Activated CD4-positive, alpha-beta T cell treated with anti-CD3 and anti-CD28 coated beads, Interleukin-2, amount 10 ng/mL, durations not matched to agents 24 days and 14 days (primary cell): ENCODE measurements at regions of chr10 and their contacts with region 1.

Region 1: DNA sequence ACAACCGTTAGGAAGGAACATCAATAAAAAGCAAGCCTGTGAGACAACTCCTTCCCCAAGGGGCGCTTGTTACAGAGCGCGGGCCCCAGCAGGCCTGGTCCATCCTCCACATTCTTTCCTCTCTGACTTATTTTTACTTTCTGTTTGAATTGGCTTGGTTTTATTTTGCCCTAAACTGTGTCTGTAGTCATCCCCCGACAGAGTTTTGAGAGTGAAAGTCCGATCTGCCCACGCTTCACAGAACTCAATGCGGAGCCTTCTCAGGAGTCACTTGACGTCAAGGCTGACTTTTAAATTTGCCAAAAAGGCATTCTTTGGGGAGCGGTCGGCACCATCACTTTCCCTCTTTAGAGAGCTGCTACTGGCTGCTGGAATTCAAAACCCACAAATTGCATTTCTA is 150.1 kb upstream of the KLF6 start:
- DNase-seq: peak; percentile 93
- H3K4me3 Mint-ChIP-seq: peak overlapping the region; percentile 65
- H3K27ac Mint-ChIP-seq: peak overlapping the region; percentile 88
- H3K4me1 Mint-ChIP-seq: peaks cover 59% of the 10 kb centered on the region
- H3K27me3 Mint-ChIP-seq: no peaks in the 10 kb centered on the region

Region 2: GRCh38 chr10:3071405-3072198 is 863.5 kb before region 1 on chr10:
- intact Hi-C with region 1: no loop called
- DNase-seq: peak; percentile 75
- H3K4me3 Mint-ChIP-seq: peak overlapping the region; percentile 72
- H3K27ac Mint-ChIP-seq: peak overlapping the region; percentile 79
- H3K4me1 Mint-ChIP-seq: peaks cover 58% of the 10 kb centered on the region
- H3K27me3 Mint-ChIP-seq: peaks cover 2% of the 10 kb centered on the region

Region 3: GRCh38 chr10:3197348-3198003 is 737.7 kb before region 1 on chr10:
- intact Hi-C with region 1: loop called (anchors 5 kb)
- DNase-seq: peak; percentile 91
- H3K4me3 Mint-ChIP-seq: peak overlapping the region; percentile 67
- H3K27ac Mint-ChIP-seq: peak overlapping the region; percentile 81
- H3K4me1 Mint-ChIP-seq: peaks cover 17% of the 10 kb centered on the region
- H3K27me3 Mint-ChIP-seq: peaks cover 89% of the 10 kb centered on the region

Region 4: GRCh38 chr10:3805791-3806461 is 129.2 kb before region 1 on chr10:
- intact Hi-C with region 1: loop called (anchors 1 kb)
- DNase-seq: peak; percentile 87
- H3K4me3 Mint-ChIP-seq: peak overlapping the region; percentile 48
- H3K27ac Mint-ChIP-seq: no peak overlapping the region
- H3K4me1 Mint-ChIP-seq: peaks cover 64% of the 10 kb centered on the region
- H3K27me3 Mint-ChIP-seq: no peaks in the 10 kb centered on the region

Region 5: GRCh38 chr10:3873728-3874461 is 61.2 kb before region 1 on chr10:
- intact Hi-C with region 1: loop called (anchors 2 kb)
- DNase-seq: peak; percentile 81
- H3K4me3 Mint-ChIP-seq: peak overlapping the region; percentile 14
- H3K27ac Mint-ChIP-seq: peak overlapping the region; percentile 88
- H3K4me1 Mint-ChIP-seq: peaks cover 52% of the 10 kb centered on the region
- H3K27me3 Mint-ChIP-seq: no peaks in the 10 kb centered on the region

Region 6: DNA sequence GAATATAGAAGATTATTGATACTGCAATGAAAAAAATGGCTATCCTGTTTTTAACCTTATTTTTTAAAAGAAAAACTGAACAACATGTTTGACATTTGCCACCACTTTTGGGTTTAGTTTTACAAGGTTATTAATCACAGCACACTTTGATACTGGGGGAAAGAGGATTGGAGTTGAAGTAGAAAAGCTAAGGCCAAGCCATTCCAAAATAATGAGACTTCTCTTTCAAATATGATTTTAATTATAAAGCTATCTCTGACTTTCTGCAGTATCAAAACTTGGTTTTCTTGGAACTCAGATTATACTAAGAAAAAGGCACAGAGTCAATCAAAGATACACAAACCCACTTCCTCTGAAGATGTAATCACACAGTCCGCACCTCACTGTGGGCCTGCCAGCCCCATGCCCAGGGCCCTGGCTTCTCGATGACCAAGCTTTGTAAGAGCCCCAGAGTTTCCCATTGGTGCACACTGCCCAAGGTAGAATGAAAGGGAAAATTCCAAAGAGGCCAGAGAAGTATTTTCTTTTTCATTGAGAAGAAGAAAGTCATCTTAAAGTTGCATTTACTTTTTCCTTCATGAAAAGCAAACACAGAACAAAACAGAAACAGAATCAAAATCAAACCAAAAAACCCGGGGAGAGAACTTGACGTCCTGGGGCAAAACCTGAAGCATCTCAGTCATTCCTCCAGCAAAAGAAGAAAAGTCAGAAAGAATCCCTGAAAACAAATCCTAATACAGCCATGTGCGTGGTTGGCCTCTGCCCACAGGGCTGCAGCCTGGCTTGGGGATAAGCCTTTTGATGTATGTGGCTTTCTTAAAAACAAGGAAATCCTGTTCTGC is 37.5 kb after region 1 on chr10:
- intact Hi-C with region 1: loop called (anchors 5 kb)
- DNase-seq: peak; percentile 87
- H3K4me3 Mint-ChIP-seq: peak overlapping the region; percentile 88
- H3K27ac Mint-ChIP-seq: peak overlapping the region; percentile 99
- H3K4me1 Mint-ChIP-seq: peaks cover 41% of the 10 kb centered on the region
- H3K27me3 Mint-ChIP-seq: no peaks in the 10 kb centered on the region

Region 7: GRCh38 chr10:4131407-4132228 is 196.5 kb after region 1 on chr10:
- intact Hi-C with region 1: loop called (anchors 1 kb)
- DNase-seq: peak; percentile 85
- H3K4me3 Mint-ChIP-seq: no peak overlapping the region
- H3K27ac Mint-ChIP-seq: no peak overlapping the region
- H3K4me1 Mint-ChIP-seq: peaks cover 50% of the 10 kb centered on the region
- H3K27me3 Mint-ChIP-seq: no peaks in the 10 kb centered on the region